Psoas muscle (tissue), 8 donors: ENCODE measurements at regions of chr3 and their contacts with region 1.

Region 1: GRCh38 chr3:108305484-108306172 is 9.3 kb downstream of the HHLA2 start:
- DNase-seq: no peak
- ATAC-seq: peak; percentile 50 to 78 (median 77)
- H3K4me3 ChIP-seq: no peak overlapping the region
- H3K27ac ChIP-seq: no peak overlapping the region
- H3K4me1 ChIP-seq: no peaks in the 10 kb centered on the region
- H3K27me3 ChIP-seq: peaks cover 0 to 2% (median 0%) of the 10 kb centered on the region in 3 donors
- CTCF ChIP-seq: no peak

Region 2: GRCh38 chr3:108029466-108029865 is 276.2 kb before region 1 on chr3:
- intact Hi-C with region 1: loop called in 1 of 2 experiments (anchors 5 kb)
- DNase-seq: no peak
- ATAC-seq: no peak
- H3K4me3 ChIP-seq: no peak overlapping the region
- H3K27ac ChIP-seq: no peak overlapping the region
- H3K4me1 ChIP-seq: no peaks in the 10 kb centered on the region
- H3K27me3 ChIP-seq: no peaks in the 10 kb centered on the region
- CTCF ChIP-seq: no peak

Region 3: GRCh38 chr3:108090701-108091451 is 214.8 kb before region 1 on chr3 and contains the start of gene CD47:
- intact Hi-C with region 1: no loop called
- DNase-seq: peak; percentile 96 to 97
- ATAC-seq: peak; percentile 95 to 97 (median 96)
- H3K4me3 ChIP-seq: peak within 1 kb of the TSS; percentile 91
- H3K27ac ChIP-seq: peak within 1 kb of the TSS; percentile 82
- H3K4me1 ChIP-seq: peaks cover 7% of the 10 kb centered on the region
- H3K27me3 ChIP-seq: no peaks in the 10 kb centered on the region
- CTCF ChIP-seq: no peak
- total RNA-seq, gene CD47: 12.9 to 26.5 (median 17.5) TPM